ENCODE measurements at regions of chr20 and their contacts with region 1.

Region 1: DNA sequence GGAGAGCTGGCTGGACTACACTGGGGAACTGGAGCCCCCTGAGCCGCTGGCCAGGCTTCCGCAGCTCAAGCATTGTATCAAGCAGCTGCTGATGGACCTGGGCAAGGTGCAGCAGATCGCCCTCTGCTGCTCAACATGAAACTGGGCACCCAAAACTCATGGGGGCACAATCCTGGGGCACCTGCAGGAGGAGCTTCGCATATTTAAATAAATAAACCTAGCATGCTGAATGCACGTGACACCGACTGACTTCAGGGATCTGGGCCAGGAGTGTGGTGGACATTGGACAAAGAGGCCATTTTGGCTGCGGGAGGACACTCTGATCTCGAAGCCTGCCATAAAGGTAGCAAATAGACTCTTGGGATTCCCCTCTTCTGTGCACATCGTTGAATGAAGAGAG is 6.8 kb downstream of the SCAND1 start:
- DNase-seq: peak; percentile 67
- ATAC-seq: peak; percentile 96
- H3K4me3 Mint-ChIP-seq: no peak overlapping the region
- H3K27ac Mint-ChIP-seq: peak overlapping the region; percentile 89
- H3K4me1 Mint-ChIP-seq: peaks cover 5% of the 10 kb centered on the region
- H3K27me3 Mint-ChIP-seq: no peaks in the 10 kb centered on the region
- CTCF ChIP-seq: 0 out of 2 replicates have a peak, but pooled peaks have one; percentile 32

Region 2: DNA sequence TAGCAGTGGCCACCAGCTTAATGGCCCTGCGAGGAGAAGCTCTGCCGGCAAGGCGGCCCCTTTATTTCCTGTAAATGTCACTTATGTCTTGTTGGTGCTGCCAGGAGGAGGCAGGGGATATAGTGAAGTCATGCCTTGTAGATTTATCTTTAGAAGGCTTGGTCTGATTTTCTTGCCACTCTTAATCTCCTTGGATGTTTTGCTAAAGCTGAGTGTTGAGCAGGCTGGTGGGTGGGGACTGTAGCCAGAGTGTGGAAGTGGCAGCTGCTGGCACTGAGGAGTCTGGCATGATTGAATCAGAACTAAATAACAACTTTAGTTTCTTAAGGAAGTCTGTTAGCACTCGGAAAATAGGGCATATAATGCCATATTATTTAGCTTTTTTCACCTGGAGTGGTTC is 97.8 kb before region 1 on chr20:
- CTCF ChIA-PET with region 1: interaction called, 14 read pairs
- POLR2A ChIA-PET with region 1: no interaction called
- DNase-seq: no peak
- ATAC-seq: no peak
- H3K4me3 Mint-ChIP-seq: no peak overlapping the region
- H3K27ac Mint-ChIP-seq: peak overlapping the region; percentile 44
- H3K4me1 Mint-ChIP-seq: no peaks in the 10 kb centered on the region
- H3K27me3 Mint-ChIP-seq: no peaks in the 10 kb centered on the region
- CTCF ChIP-seq: no peak

Region 3: GRCh38 chr20:35883778-35884540 is 63.5 kb before region 1 on chr20:
- CTCF ChIA-PET with region 1: interaction called, 12 read pairs
- POLR2A ChIA-PET with region 1: no interaction called
- DNase-seq: peak; percentile 72
- ATAC-seq: peak; percentile 98
- H3K4me3 Mint-ChIP-seq: no peak overlapping the region
- H3K27ac Mint-ChIP-seq: peak overlapping the region; percentile 85
- H3K4me1 Mint-ChIP-seq: peaks cover 11% of the 10 kb centered on the region
- H3K27me3 Mint-ChIP-seq: no peaks in the 10 kb centered on the region
- CTCF ChIP-seq: no peak

Region 4: GRCh38 chr20:35907017-35907701 is 40.3 kb before region 1 on chr20:
- CTCF ChIA-PET with region 1: interaction called, 12 read pairs
- POLR2A ChIA-PET with region 1: no interaction called
- DNase-seq: no peak
- ATAC-seq: no peak
- H3K4me3 Mint-ChIP-seq: no peak overlapping the region
- H3K27ac Mint-ChIP-seq: peak overlapping the region; percentile 95
- H3K4me1 Mint-ChIP-seq: peaks cover 29% of the 10 kb centered on the region
- H3K27me3 Mint-ChIP-seq: no peaks in the 10 kb centered on the region
- CTCF ChIP-seq: no peak

Region 5: GRCh38 chr20:35934050-35934449 is 13.4 kb before region 1 on chr20:
- CTCF ChIA-PET with region 1: interaction called, 13 read pairs
- POLR2A ChIA-PET with region 1: no interaction called
- DNase-seq: peak; percentile 18
- ATAC-seq: peak; percentile 93
- H3K4me3 Mint-ChIP-seq: no peak overlapping the region
- H3K27ac Mint-ChIP-seq: peak overlapping the region; percentile 95
- H3K4me1 Mint-ChIP-seq: peaks cover 23% of the 10 kb centered on the region
- H3K27me3 Mint-ChIP-seq: no peaks in the 10 kb centered on the region
- CTCF ChIP-seq: no peak

Measured in WTC11 (cell line).